ENCODE measurements at regions of chr11 and their contacts with region 1.

Region 1: DNA sequence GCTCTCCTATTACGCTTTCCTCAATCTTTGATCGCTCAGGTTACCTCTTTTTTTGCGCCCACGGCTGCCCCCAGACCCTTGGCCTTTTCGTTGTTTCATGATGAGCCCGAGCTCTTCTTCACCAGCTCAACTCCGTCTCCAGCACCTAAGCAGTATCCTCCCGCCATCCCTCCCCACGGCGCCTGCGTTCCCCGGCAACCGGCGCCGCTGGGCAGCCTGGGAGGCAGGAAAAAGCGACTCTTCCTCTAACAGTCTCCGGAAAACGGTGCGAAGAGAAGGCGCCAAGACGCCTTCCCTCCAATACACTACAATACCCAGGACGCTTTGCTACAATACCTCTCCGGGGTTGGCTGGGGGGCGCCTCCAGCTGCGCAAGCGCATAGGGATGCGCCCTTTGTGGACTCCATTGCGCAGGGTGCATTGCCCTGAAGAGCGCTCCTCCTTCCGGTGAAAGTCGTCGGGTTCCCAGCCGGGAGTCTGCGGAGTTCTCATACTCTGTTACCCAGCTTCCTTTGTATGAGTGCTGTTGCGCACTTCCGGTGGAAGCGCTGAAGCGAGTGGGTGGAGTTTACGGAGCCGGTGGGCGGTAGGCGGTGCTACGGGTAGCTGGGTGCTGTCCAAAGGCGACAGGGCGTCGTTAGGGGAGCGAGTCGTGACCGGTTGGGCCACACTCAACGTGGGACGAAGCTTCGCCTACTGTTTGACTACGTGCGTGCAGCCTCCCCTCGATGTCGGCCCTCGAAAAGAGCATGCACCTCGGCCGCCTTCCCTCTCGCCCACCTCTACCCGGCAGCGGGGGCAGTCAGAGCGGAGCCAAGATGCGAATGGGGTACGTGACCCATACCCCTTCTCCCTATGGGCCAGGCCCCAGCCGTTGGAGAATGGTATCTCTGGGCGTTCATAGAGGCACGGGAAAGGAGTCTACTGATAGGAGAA is at the starts of genes C2CD3 and PPME1:
- DNase-seq: peak; percentile 93 to 100 (median 97)
- ATAC-seq: peak; percentile 94
- H3K4me3 ChIP-seq: peak within 1 kb of the TSS; percentile 90
- H3K4me3 Mint-ChIP-seq: no peak within 1 kb of the TSS
- H3K27ac ChIP-seq: peak within 1 kb of the TSS; percentile 75 to 78
- H3K27ac Mint-ChIP-seq: no peak within 1 kb of the TSS
- H3K4me1 ChIP-seq: peaks cover 26% of the 10 kb centered on the region
- H3K4me1 Mint-ChIP-seq: peaks cover 20% of the 10 kb centered on the region
- H3K27me3 ChIP-seq: no peaks in the 10 kb centered on the region
- H3K27me3 Mint-ChIP-seq: no peaks in the 10 kb centered on the region
- CTCF ChIP-seq: peak; percentile 24
- total RNA-seq, gene C2CD3: 31.9 to 35.1 TPM
- total RNA-seq, gene PPME1: 13.7 to 16.3 TPM

Region 2: GRCh38 chr11:72430741-72431570 is 1740.0 kb before region 1 on chr11:
- CTCF ChIA-PET with region 1: no interaction called
- POLR2A ChIA-PET with region 1: interaction called, 3 read pairs
- intact Hi-C with region 1: loop called in 1 of 2 experiments (anchors 5 kb)
- DNase-seq: peak in 12 of 14 experiments; percentile 9 to 74 (median 18)
- ATAC-seq: peak; percentile 16
- H3K4me3 ChIP-seq: no peak overlapping the region
- H3K4me3 Mint-ChIP-seq: peak overlapping the region; percentile 7
- H3K27ac ChIP-seq: no peak overlapping the region
- H3K27ac Mint-ChIP-seq: peak overlapping the region; percentile 58
- H3K4me1 ChIP-seq: peaks cover 24% of the 10 kb centered on the region
- H3K4me1 Mint-ChIP-seq: peaks cover 44% of the 10 kb centered on the region
- H3K27me3 ChIP-seq: no peaks in the 10 kb centered on the region
- H3K27me3 Mint-ChIP-seq: no peaks in the 10 kb centered on the region
- CTCF ChIP-seq: peak; percentile 67

Region 3: DNA sequence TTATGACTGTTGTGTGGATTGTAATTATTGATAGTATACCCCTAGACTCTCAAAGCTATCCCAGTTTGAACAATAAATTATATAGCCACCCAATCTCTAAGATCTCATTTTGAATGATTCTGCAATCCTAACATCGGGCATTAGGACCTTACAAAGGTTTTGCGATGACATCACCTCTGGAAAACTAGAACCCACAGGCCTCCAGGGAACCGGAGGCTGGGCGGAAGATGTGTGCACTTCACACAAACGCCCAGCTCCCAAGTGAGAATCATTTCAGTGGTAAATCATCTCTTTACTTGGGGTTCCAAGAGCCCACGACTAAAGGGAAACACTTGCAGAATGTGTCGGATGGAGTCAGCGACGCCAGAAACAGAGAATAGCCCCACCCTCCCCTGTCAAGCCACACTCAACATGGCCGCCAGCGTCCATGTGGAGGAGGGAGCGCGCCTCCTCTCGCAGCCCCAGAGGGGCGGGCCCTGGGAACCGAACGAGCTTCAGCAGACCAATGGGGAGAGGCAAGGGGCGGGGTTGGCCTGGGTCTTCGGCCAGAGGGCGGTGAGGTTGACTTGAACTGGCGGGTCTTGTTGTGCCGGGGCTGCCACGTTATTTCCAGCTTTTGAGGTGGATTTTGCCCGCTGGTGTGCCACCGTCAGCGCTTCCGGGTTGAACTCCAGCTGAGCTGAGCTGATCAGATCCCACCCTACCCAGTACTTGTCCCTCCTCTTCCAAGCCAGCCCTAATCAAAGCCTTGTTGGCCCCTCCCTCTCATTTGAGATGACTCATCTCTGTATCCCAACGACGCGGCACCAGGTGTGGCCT is 391.7 kb before region 1 on chr11:
- CTCF ChIA-PET with region 1: no interaction called
- POLR2A ChIA-PET with region 1: interaction called, 11 read pairs
- intact Hi-C with region 1: loop called in 1 of 2 experiments (anchors 5 kb)
- DNase-seq: peak; percentile 95 to 99 (median 97)
- ATAC-seq: peak; percentile 95
- H3K4me3 ChIP-seq: peak overlapping the region; percentile 78
- H3K4me3 Mint-ChIP-seq: peak overlapping the region; percentile 95
- H3K27ac ChIP-seq: peak overlapping the region; percentile 95 to 99
- H3K27ac Mint-ChIP-seq: peak overlapping the region; percentile 99
- H3K4me1 ChIP-seq: peaks cover 13% of the 10 kb centered on the region
- H3K4me1 Mint-ChIP-seq: peaks cover 14% of the 10 kb centered on the region
- H3K27me3 ChIP-seq: no peaks in the 10 kb centered on the region
- H3K27me3 Mint-ChIP-seq: no peaks in the 10 kb centered on the region
- CTCF ChIP-seq: no peak

Region 4: GRCh38 chr11:73965076-73965860 is 205.7 kb before region 1 on chr11:
- CTCF ChIA-PET with region 1: no interaction called
- POLR2A ChIA-PET with region 1: interaction called, 10 read pairs
- intact Hi-C with region 1: loop called in 1 of 2 experiments (anchors 5 kb)
- DNase-seq: peak in 1 of 14 experiments; percentile 35
- ATAC-seq: no peak
- H3K4me3 ChIP-seq: no peak overlapping the region
- H3K4me3 Mint-ChIP-seq: no peak overlapping the region
- H3K27ac ChIP-seq: no peak overlapping the region
- H3K27ac Mint-ChIP-seq: peak overlapping the region; percentile 73
- H3K4me1 ChIP-seq: peaks cover 63% of the 10 kb centered on the region
- H3K4me1 Mint-ChIP-seq: peaks cover 52% of the 10 kb centered on the region
- H3K27me3 ChIP-seq: no peaks in the 10 kb centered on the region
- H3K27me3 Mint-ChIP-seq: no peaks in the 10 kb centered on the region
- CTCF ChIP-seq: no peak

Region 5: DNA sequence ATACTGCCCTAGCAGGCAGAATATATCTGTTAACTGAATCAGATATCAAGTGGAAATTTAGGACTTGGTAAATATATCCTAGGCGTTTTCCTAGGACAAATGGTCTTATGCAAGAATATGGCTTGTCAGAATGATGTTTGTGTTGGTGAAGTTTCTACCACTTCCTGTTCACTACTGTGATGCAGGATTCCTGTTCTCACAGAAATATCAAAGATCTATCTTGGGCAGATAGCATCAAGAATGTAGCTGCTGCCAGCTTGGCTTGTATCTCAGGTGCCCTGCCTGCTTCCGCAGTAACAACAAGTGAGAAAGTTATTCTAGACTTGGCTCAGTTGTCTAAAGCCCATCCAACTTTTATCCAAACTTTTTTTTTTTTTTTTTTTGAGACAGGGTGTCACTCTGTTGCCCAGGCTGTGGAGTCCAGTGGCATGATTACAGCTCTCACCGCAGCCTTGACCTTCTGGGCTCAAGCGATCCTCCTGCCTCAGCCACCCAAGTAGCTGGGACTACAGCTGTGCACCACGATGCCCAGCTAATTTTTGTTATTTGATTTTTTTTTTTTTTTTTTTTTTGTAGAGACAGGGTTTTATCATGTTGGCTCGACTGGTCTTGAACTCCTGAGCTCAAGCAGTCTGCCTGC is 61.5 kb after region 1 on chr11:
- CTCF ChIA-PET with region 1: no interaction called
- POLR2A ChIA-PET with region 1: interaction called, 15 read pairs
- intact Hi-C with region 1: loop called (anchors 1 to 5 kb)
- DNase-seq: peak in 12 of 14 experiments; percentile 5 to 77 (median 30)
- ATAC-seq: peak; percentile 91
- H3K4me3 ChIP-seq: no peak overlapping the region
- H3K4me3 Mint-ChIP-seq: peak overlapping the region; percentile 7
- H3K27ac ChIP-seq: peak overlapping the region; percentile 68 to 78
- H3K27ac Mint-ChIP-seq: no peak overlapping the region
- H3K4me1 ChIP-seq: peaks cover 19% of the 10 kb centered on the region
- H3K4me1 Mint-ChIP-seq: peaks cover 43% of the 10 kb centered on the region
- H3K27me3 ChIP-seq: no peaks in the 10 kb centered on the region
- H3K27me3 Mint-ChIP-seq: no peaks in the 10 kb centered on the region
- CTCF ChIP-seq: no peak

Region 6: GRCh38 chr11:74262725-74263124 is 91.8 kb after region 1 on chr11:
- CTCF ChIA-PET with region 1: no interaction called
- POLR2A ChIA-PET with region 1: no interaction called
- intact Hi-C with region 1: no loop called
- DNase-seq: no peak
- ATAC-seq: no peak
- H3K4me3 ChIP-seq: no peak overlapping the region
- H3K4me3 Mint-ChIP-seq: no peak overlapping the region
- H3K27ac ChIP-seq: no peak overlapping the region
- H3K27ac Mint-ChIP-seq: no peak overlapping the region
- H3K4me1 ChIP-seq: no peaks in the 10 kb centered on the region
- H3K4me1 Mint-ChIP-seq: peaks cover under 1% of the 10 kb centered on the region
- H3K27me3 ChIP-seq: no peaks in the 10 kb centered on the region
- H3K27me3 Mint-ChIP-seq: no peaks in the 10 kb centered on the region
- CTCF ChIP-seq: no peak

Region 7: GRCh38 chr11:74592441-74593362 is 421.7 kb after region 1 on chr11 and contains the start of gene POLD3:
- CTCF ChIA-PET with region 1: no interaction called
- POLR2A ChIA-PET with region 1: no interaction called
- intact Hi-C with region 1: loop called in 1 of 2 experiments (anchors 5 kb)
- DNase-seq: peak; percentile 91 to 96 (median 94)
- ATAC-seq: peak; percentile 97
- H3K4me3 ChIP-seq: peak within 1 kb of the TSS; percentile 84
- H3K4me3 Mint-ChIP-seq: peak within 1 kb of the TSS; percentile 97
- H3K27ac ChIP-seq: peak within 1 kb of the TSS; percentile 85 to 90
- H3K27ac Mint-ChIP-seq: peak within 1 kb of the TSS; percentile 92
- H3K4me1 ChIP-seq: peaks cover 13% of the 10 kb centered on the region
- H3K4me1 Mint-ChIP-seq: peaks cover 28% of the 10 kb centered on the region
- H3K27me3 ChIP-seq: no peaks in the 10 kb centered on the region
- H3K27me3 Mint-ChIP-seq: no peaks in the 10 kb centered on the region
- CTCF ChIP-seq: no peak
- total RNA-seq, gene POLD3: 4.6 to 5.2 TPM

Region 8: GRCh38 chr11:75814686-75815344 is 1643.9 kb after region 1 on chr11 and contains the start of gene UVRAG:
- CTCF ChIA-PET with region 1: no interaction called
- POLR2A ChIA-PET with region 1: no interaction called
- intact Hi-C with region 1: loop called in 1 of 2 experiments (anchors 10 kb)
- DNase-seq: peak; percentile 96 to 99 (median 97)
- ATAC-seq: peak; percentile 86
- H3K4me3 ChIP-seq: peak within 1 kb of the TSS; percentile 88
- H3K4me3 Mint-ChIP-seq: peak within 1 kb of the TSS; percentile 95
- H3K27ac ChIP-seq: peak within 1 kb of the TSS; percentile 78 to 83
- H3K27ac Mint-ChIP-seq: peak within 1 kb of the TSS; percentile 92
- H3K4me1 ChIP-seq: peaks cover 30% of the 10 kb centered on the region
- H3K4me1 Mint-ChIP-seq: peaks cover 29% of the 10 kb centered on the region
- H3K27me3 ChIP-seq: no peaks in the 10 kb centered on the region
- H3K27me3 Mint-ChIP-seq: no peaks in the 10 kb centered on the region
- CTCF ChIP-seq: no peak
- total RNA-seq, gene UVRAG: 16.5 to 19.5 TPM